Posterior vena cava (tissue), 2 donors: ENCODE measurements at regions of chr11 and their contacts with region 1.

Region 1: DNA sequence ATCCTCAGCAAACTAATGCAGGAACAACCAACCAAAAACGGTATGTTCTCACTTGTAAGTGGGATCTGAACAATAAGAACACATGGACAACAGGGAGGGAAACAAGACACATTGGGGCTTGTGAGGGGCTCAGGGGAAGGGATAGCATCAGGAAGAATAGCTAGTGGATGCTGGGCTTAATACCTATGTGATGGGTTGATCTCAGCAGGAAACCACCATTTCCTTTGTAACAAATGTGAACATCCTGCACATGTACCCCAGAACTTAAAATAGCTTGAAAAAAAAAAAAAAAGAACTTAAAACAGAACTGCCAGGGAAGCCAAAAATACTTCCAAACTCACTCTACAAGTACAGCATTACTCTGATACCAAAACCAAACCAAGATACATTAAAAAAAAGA is 33.8 kb downstream of the CASP4 start:
- DNase-seq: no peak

Region 2: DNA sequence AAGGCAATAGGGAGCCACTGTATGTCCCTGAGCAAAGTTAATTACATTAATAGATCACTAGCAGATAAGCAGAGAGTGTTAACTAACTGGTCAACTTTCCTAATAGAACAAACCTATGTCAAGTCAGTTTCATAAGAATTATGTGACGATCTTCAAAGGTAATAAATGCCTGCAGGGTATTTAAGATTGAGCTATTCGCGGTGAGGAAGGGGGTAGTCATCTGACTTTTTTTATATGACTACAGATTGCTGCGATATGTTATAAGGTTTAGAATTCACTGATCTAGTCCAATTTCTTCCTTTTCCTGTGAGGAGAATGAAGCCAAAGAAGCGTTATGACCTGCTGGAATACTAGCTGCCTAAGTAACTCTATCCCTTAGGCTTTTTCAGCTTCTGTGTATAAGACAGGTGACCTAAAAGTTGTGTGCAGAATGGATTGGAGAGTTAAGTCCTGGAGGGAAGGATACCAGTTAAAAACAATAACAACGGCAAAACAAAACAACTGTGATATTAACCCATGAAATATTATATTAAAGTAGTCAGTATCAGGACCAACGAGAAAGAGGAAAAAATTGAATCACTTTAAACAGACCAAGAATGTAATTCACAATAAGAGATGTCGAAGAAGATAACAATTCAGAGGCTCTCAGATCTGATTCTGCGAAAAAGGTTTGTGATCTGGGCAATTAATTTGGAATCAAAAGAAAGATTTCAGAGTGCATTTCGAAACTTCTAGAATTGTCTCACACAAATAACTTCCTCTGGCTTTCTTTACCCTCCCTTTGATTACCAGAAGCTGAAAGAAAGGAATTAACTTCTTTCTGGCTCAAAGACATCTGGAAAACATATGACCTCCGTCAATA is 33.1 kb after region 1 on chr11:
- intact Hi-C with region 1: loop called in 1 of 2 experiments (anchors 2 kb)
- DNase-seq: no peak